IMR-90 (cell line): ENCODE measurements at regions of chr13 and their contacts with region 1.

Region 1: GRCh38 chr13:100209857-100210825 is 121.2 kb downstream of the PCCA start:
- DNase-seq: peak; percentile 82
- ATAC-seq: peak; percentile 42
- H3K4me3 ChIP-seq: no peak overlapping the region
- H3K27ac ChIP-seq: peak overlapping the region; percentile 55; the same call in 1 of the 2 replicates
- H3K4me1 ChIP-seq: peaks cover 14% of the 10 kb centered on the region; the same call in 1 of the 2 replicates
- H3K27me3 ChIP-seq: no peaks in the 10 kb centered on the region
- CTCF ChIP-seq: no peak
- POLR2A ChIP-seq: no peak
- RAD21 ChIP-seq: no peak

Region 2: DNA sequence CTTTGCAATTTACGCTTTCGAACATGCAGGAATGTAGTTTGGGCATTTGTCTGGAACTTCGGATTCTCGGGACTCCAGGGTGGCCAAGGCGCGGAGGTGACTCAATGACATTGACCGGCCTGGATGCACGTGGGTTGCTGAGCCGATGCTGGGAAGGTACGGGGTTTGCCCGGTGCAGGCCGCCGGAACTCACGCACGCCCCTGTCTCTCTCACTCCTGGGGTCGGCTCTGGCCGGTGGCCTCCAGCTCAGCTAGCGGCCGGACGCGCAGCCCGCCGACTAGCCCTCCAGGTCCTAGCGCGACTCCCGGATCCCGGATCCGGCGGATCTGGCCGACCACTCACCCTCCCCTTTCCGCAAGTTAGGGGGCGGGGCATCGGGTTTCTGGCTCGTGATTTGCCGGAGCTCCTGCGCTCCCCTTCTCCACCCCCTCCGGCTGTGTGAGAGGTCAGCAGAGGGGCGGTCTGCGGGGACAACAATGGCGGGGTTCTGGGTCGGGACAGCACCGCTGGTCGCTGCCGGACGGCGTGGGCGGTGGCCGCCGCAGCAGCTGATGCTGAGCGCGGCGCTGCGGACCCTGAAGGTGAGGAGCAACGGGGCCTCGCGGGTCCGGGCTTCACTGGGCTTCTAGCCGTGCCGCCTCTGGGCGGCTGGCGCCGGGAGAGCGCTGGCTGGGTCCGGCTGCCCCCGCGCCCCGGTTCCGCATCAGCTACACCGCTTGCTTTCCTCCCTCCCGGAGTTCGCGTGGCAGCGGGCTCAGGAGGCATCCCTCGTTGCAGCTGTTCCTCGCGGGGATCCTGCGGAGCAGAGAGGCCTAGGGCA is 121.3 kb before region 1 on chr13 and contains the start of gene PCCA:
- CTCF ChIA-PET with region 1: no interaction called
- POLR2A ChIA-PET with region 1: no interaction called
- dilution Hi-C with region 1: no loop called
- in situ Hi-C with region 1: no loop called
- intact Hi-C with region 1: loop called (anchors 5 kb)
- DNase-seq: peak; percentile 89
- ATAC-seq: peak; percentile 98
- H3K4me3 ChIP-seq: peak within 1 kb of the TSS; percentile 75
- H3K27ac ChIP-seq: peak within 1 kb of the TSS; percentile 87
- H3K4me1 ChIP-seq: peaks cover 2% of the 10 kb centered on the region
- H3K27me3 ChIP-seq: no peaks in the 10 kb centered on the region
- CTCF ChIP-seq: no peak
- POLR2A ChIP-seq: no peak
- RAD21 ChIP-seq: 0 out of 2 replicates have a peak, but pooled peaks have one; percentile 6
- total RNA-seq, gene PCCA: 22.8 and 24.0 TPM in 2 replicates

Region 3: DNA sequence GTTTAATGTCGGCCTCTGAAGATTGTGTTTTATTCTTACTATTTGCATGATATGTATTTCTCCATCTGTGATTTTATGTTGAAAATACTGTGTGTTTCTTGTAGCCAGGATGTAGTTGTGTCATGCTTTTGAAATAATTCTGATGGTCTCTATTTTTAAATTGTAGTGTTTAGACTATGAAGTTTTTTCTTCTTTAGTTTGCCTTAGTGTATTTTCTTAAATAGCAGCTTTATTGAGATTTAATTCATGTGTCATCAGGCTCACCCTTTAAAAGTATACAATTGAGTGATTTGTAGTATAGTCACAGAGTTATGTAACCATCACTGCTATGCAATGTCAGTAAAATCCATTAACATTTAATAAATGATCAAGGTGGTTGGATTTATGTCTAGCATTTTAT is 46.8 kb before region 1 on chr13:
- CTCF ChIA-PET with region 1: no interaction called
- POLR2A ChIA-PET with region 1: no interaction called
- dilution Hi-C with region 1: no loop called
- in situ Hi-C with region 1: no loop called
- intact Hi-C with region 1: loop called (anchors 5 kb)
- DNase-seq: peak; percentile 61
- ATAC-seq: peak; percentile 84
- H3K4me3 ChIP-seq: no peak overlapping the region
- H3K27ac ChIP-seq: no peak overlapping the region
- H3K4me1 ChIP-seq: peaks cover 11% of the 10 kb centered on the region
- H3K27me3 ChIP-seq: no peaks in the 10 kb centered on the region
- CTCF ChIP-seq: no peak
- POLR2A ChIP-seq: no peak
- RAD21 ChIP-seq: no peak

Region 4: DNA sequence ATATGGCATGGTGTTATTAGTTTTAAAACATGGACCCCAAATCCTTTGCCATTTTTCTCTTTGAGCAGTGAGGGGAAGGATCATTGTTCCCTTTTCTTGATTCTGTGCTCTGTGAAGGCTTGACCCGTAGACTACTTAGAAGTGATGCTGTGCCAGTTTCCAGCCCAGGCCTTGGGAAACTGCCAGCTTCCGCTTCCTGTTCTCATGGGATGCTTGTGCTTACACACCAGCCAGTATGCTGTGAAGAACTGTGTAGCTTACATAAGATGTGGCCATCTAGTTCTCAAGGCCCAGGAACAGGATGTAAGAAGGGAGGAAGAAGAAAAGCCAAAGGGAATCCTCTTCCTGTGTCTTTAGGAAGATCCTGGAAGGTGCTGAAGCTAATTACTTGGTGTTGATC is 59.7 kb after region 1 on chr13:
- CTCF ChIA-PET with region 1: no interaction called
- POLR2A ChIA-PET with region 1: no interaction called
- dilution Hi-C with region 1: no loop called
- in situ Hi-C with region 1: no loop called
- intact Hi-C with region 1: no loop called
- DNase-seq: peak; percentile 82
- ATAC-seq: peak; percentile 70
- H3K4me3 ChIP-seq: no peak overlapping the region
- H3K27ac ChIP-seq: no peak overlapping the region
- H3K4me1 ChIP-seq: peaks cover 1% of the 10 kb centered on the region; the same call in 1 of the 2 replicates
- H3K27me3 ChIP-seq: no peaks in the 10 kb centered on the region
- CTCF ChIP-seq: no peak
- POLR2A ChIP-seq: no peak
- RAD21 ChIP-seq: no peak

Region 5: DNA sequence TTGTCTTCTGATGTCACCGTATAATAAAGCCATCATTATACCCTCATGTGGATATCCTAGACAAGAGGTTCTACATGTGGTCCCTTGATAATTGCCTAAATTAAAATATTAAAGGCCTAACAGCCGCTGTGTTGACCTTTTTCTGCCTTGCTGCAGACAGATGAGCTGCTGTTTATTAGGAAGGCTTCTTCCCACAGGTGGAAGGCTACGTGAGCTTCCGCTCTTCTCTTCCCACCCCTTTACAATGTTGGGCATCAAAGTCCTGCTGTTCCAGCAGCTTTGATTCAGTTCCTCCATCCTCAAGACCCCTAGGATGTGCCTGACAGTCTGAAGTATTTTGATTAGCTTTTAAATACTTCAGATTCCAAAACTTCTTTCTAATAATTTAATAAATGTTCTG is 95.9 kb after region 1 on chr13:
- CTCF ChIA-PET with region 1: no interaction called
- POLR2A ChIA-PET with region 1: no interaction called
- dilution Hi-C with region 1: no loop called
- in situ Hi-C with region 1: no loop called
- intact Hi-C with region 1: no loop called
- DNase-seq: no peak
- ATAC-seq: no peak
- H3K4me3 ChIP-seq: no peak overlapping the region
- H3K27ac ChIP-seq: no peak overlapping the region
- H3K4me1 ChIP-seq: no peaks in the 10 kb centered on the region
- H3K27me3 ChIP-seq: no peaks in the 10 kb centered on the region
- CTCF ChIP-seq: no peak
- POLR2A ChIP-seq: no peak
- RAD21 ChIP-seq: no peak

Region 6: DNA sequence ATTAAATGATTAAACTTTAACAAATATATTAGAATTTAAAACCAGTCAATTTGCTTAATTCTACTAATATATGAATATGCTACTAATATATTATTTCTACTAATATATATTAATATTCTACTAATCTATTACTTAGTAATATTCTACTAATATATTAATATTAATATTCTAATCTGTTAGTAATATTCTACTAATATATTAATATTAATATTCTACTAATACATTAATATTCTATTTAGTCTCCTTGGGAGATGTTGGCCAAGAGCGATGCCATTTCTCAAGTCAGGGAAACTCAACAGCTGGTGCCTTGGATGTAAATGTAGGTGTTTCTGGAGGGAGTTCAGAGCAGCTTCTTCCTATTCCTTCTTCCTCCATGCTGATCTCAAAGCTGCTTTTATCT is 723.7 kb after region 1 on chr13:
- CTCF ChIA-PET with region 1: no interaction called
- POLR2A ChIA-PET with region 1: no interaction called
- dilution Hi-C with region 1: no loop called
- in situ Hi-C with region 1: no loop called
- intact Hi-C with region 1: no loop called
- DNase-seq: no peak
- ATAC-seq: no peak
- H3K4me3 ChIP-seq: no peak overlapping the region
- H3K27ac ChIP-seq: no peak overlapping the region
- H3K4me1 ChIP-seq: no peaks in the 10 kb centered on the region
- H3K27me3 ChIP-seq: peaks cover 6% of the 10 kb centered on the region
- CTCF ChIP-seq: no peak
- POLR2A ChIP-seq: no peak
- RAD21 ChIP-seq: no peak